ENCODE measurements at regions of chr19 and their contacts with region 1.

Region 1: DNA sequence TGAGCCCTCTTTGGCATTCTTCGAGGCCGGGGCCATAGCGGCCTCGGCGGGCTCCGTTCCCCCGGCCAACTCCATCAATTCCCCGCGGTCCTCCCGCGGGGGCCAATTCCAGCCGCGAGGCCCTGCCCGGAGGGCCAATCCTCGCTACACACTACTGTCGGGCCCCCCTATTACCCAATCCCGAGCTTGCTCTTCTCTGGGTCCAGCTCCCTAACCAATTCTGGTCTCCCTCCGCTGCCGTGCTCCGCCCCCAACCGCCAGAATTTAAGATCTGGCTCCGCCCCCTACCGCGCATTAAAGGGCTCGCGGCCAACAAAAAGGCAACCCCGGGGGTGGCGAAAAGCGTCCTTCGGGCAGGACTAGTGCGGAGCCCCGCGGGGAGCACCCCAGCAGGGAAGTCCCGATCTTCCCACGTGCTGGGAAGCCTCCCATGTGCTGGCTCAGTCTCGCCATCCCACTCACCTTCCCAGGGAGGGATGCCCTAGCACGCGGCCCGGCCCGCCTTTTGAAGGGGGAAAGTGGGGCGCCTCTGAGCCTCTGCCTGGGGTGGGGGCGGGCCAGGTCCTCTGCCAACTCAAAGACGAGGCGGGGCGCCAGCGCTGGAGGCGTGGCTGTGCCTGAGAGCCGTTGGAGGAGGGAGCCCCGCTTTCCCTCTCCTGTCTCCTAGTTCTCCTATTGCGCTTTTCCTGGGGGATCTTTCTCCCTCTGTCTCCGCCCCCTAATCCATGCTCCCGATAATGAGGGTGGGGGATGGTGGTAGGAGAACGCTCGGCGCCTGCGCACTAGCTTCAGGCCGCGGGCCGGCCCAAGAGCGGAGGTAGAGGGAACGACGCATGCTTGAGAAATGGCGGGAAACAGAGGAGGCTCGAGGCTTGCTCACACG is 3.5 kb downstream of the LIPE start:
- DNase-seq: peak; percentile 79 to 94 (median 94)
- ATAC-seq: peak; percentile 95
- H3K4me3 ChIP-seq: peak overlapping the region; percentile 70
- H3K4me3 Mint-ChIP-seq: peak overlapping the region; percentile 89 to 100 (median 98)
- H3K27ac ChIP-seq: peak overlapping the region; percentile 77
- H3K27ac Mint-ChIP-seq: peak overlapping the region; percentile 72 to 96 (median 87)
- H3K4me1 ChIP-seq: peaks cover 21 to 30% of the 10 kb centered on the region in 2 donors
- H3K4me1 Mint-ChIP-seq: peaks cover 30 to 46% (median 39%) of the 10 kb centered on the region in 7 donors
- H3K27me3 ChIP-seq: no peaks in the 10 kb centered on the region
- H3K27me3 Mint-ChIP-seq: peaks cover 0 to 4% (median 0%) of the 10 kb centered on the region in 5 donors

Region 2: GRCh38 chr19:41397086-41398049 is 1026.3 kb before region 1 on chr19 and contains the starts of genes BCKDHA and EXOSC5:
- CTCF ChIA-PET with region 1: no interaction called
- POLR2A ChIA-PET with region 1: no interaction called
- intact Hi-C with region 1: loop called in 1 of 2 experiments (anchors 5 kb)
- DNase-seq: peak; percentile 96 to 100 (median 99)
- ATAC-seq: peak; percentile 99
- H3K4me3 ChIP-seq: peak within 1 kb of the TSS; percentile 96
- H3K4me3 Mint-ChIP-seq: peak within 1 kb of the TSS; percentile 95 to 99 (median 98)
- H3K27ac ChIP-seq: peak within 1 kb of the TSS; percentile 89
- H3K27ac Mint-ChIP-seq: peak within 1 kb of the TSS; percentile 99 to 100 (median 100)
- H3K4me1 ChIP-seq: peaks cover 19 to 23% of the 10 kb centered on the region in 2 donors
- H3K4me1 Mint-ChIP-seq: peaks cover 33 to 61% (median 50%) of the 10 kb centered on the region in 7 donors
- H3K27me3 ChIP-seq: no peaks in the 10 kb centered on the region
- H3K27me3 Mint-ChIP-seq: no peaks in the 10 kb centered on the region
- total RNA-seq, gene BCKDHA: 19.4 to 25.0 (median 20.5) TPM
- total RNA-seq, gene EXOSC5: 15.0 to 37.5 (median 20.6) TPM

Region 3: GRCh38 chr19:42301656-42302203 is 122.0 kb before region 1 on chr19 and contains the start of gene PRR19:
- CTCF ChIA-PET with region 1: no interaction called
- POLR2A ChIA-PET with region 1: no interaction called
- intact Hi-C with region 1: loop called (anchors 1 kb)
- DNase-seq: peak in 1 of 9 donors; percentile 21
- ATAC-seq: peak; percentile 8
- H3K4me3 ChIP-seq: peak within 1 kb of the TSS; percentile 85
- H3K4me3 Mint-ChIP-seq: peak within 1 kb of the TSS; percentile 83 to 92 (median 89)
- H3K27ac ChIP-seq: peak within 1 kb of the TSS; percentile 71
- H3K27ac Mint-ChIP-seq: peak within 1 kb of the TSS; percentile 64 to 94 (median 88)
- H3K4me1 ChIP-seq: peaks cover 11 to 16% of the 10 kb centered on the region in 2 donors
- H3K4me1 Mint-ChIP-seq: peaks cover 11 to 30% (median 23%) of the 10 kb centered on the region in 7 donors
- H3K27me3 ChIP-seq: no peaks in the 10 kb centered on the region
- H3K27me3 Mint-ChIP-seq: no peaks in the 10 kb centered on the region
- total RNA-seq, gene PRR19: 0.32 to 0.68 (median 0.38) TPM in 4 of 5 experiments, not detected in the other

Region 4: GRCh38 chr19:42396381-42397262 is 27.1 kb before region 1 on chr19:
- CTCF ChIA-PET with region 1: interaction called, 6 read pairs
- POLR2A ChIA-PET with region 1: interaction called, 8 read pairs
- intact Hi-C with region 1: loop called (anchors 1 kb)
- DNase-seq: peak; percentile 80 to 97 (median 84)
- ATAC-seq: peak; percentile 96
- H3K4me3 ChIP-seq: peak overlapping the region; percentile 93
- H3K4me3 Mint-ChIP-seq: peak overlapping the region; percentile 85 to 99 (median 91)
- H3K27ac ChIP-seq: peak overlapping the region; percentile 70
- H3K27ac Mint-ChIP-seq: peak overlapping the region; percentile 85 to 93 (median 88)
- H3K4me1 ChIP-seq: peaks cover 13 to 16% of the 10 kb centered on the region in 2 donors
- H3K4me1 Mint-ChIP-seq: peaks cover 29 to 49% (median 44%) of the 10 kb centered on the region in 7 donors
- H3K27me3 ChIP-seq: no peaks in the 10 kb centered on the region
- H3K27me3 Mint-ChIP-seq: peaks cover 0 to 8% (median 6%) of the 10 kb centered on the region in 5 donors

Region 5: DNA sequence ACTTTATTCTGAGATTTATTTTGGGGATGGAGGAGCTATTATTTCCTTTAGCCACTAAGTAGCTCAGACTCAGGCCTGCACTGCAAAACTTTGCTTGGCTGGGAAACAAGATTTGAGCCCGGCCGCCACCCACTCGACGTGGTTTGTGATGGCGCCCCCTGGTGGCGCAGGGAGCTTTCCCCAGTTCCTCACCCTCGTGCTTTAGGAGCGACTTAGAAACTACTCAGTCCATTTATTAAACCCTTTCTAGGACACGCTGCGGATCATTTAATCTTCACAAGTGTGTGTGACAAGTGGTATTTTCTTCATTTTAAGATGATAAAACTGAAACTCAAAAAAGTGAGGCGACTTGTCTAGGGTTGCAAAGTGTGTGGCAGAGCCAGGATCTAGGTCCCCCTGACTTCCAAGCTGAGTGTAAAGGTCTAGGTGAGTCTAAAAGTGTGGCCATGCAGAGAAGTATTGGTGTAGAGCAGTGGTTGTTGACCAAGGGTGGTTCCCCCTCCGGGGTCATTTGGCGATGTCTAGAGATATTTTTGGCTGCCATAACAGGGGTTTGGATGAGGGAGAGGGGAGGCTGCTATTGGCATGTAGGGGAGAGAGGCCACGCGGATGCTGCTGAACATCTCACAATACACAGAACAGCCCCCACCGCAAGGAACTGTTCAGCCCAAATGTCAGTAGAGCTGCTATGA is 16.8 kb after region 1 on chr19:
- CTCF ChIA-PET with region 1: interaction called, 94 read pairs
- POLR2A ChIA-PET with region 1: interaction called, 4 read pairs
- intact Hi-C with region 1: loop called (anchors 1 to 2 kb)
- DNase-seq: peak; percentile 51 to 84 (median 76)
- ATAC-seq: peak; percentile 75
- H3K4me3 ChIP-seq: no peak overlapping the region
- H3K4me3 Mint-ChIP-seq: peak overlapping the region in 7 of 10 donors; percentile 24 to 69 (median 47)
- H3K27ac ChIP-seq: no peak overlapping the region
- H3K27ac Mint-ChIP-seq: peak overlapping the region in 8 of 9 donors; percentile 2 to 53 (median 25)
- H3K4me1 ChIP-seq: peaks cover 13 to 16% of the 10 kb centered on the region in 2 donors
- H3K4me1 Mint-ChIP-seq: peaks cover 20 to 34% (median 31%) of the 10 kb centered on the region in 7 donors
- H3K27me3 ChIP-seq: no peaks in the 10 kb centered on the region
- H3K27me3 Mint-ChIP-seq: peaks cover 0 to 7% (median 0%) of the 10 kb centered on the region in 5 donors

Measured in naive thymus-derived CD4-positive, alpha-beta T cell (primary cell).